H1 (cell line): ENCODE measurements at regions of chr19 and their contacts with region 1.

Region 1: DNA sequence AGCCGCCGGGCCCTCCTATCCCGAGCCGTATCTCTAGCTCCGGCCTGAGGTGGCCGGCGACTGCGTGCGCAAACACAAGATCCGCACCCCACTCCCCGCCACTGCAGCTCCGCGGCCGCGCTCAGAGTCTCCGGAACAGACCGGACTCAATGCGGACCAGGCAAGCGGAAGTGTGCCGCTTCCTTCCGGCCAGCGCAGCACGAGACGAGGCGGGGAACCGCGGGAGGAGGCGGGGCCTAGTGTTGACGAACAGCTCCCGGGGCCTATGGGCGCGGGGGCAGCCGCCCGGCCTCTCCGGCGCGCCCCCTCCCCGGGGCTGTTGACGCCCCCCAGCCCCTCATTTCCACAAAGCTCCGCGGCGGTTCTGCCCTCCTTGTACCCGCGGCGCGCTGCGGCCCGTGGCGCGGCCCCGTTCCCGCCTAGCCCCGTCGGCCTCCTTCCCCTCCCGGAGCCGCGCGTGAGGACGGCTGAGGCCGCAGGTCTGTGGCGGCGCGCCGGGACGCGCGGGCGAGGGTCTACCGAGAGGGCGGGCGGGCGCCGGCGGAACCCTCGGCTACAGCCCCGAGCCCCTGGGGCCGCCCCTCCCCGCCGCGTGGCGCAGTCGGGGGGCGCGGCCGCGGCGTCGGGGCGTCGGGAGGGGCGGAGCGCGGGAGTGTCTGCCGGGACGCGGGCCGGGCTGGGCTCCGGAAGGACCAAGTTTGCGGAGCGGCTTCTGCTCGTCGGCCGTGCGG is at the start of gene DPY19L3:
- DNase-seq: peak; percentile 84 to 98
- H3K4me3 ChIP-seq: peak within 1 kb of the TSS; percentile 76 to 89 (median 87)
- H3K27ac ChIP-seq: peak within 1 kb of the TSS; percentile 96
- H3K4me1 ChIP-seq: peaks cover 2 to 14% (median 7%) of the 10 kb centered on the region in 4 experiments; a peak in 6 of 7 replicates
- H3K27me3 ChIP-seq: no peaks in the 10 kb centered on the region; a peak in 1 of 7 replicates
- CTCF ChIP-seq: no peak
- EP300 ChIP-seq: no peak
- POLR2A ChIP-seq: peak; percentile 87 to 99
- RAD21 ChIP-seq: no peak
- total RNA-seq, gene DPY19L3: 60.2 and 60.7 TPM in 2 replicates

Region 2: DNA sequence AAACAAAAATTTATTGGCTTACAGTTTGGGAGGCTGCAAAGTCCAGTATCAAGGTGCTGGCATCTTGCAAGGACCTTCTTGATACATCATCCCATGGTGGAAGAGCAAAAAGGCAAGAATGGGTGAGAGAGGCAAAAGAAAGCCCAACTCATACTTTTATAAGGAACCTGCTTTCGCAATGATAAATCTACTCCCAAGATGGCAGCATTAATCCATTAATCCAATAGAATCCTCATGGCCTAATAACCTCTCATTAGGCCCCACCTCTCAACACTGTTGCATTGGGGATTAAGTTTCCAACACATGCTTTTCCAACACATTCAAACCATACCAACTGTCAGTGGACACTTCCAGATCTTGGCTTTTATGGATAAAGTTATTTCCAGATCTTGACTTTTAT is 108.9 kb before region 1 on chr19:
- CTCF ChIA-PET with region 1: no interaction called
- POLR2A ChIA-PET with region 1: no interaction called
- DNase-seq: no peak
- H3K4me3 ChIP-seq: no peak overlapping the region
- H3K27ac ChIP-seq: no peak overlapping the region
- H3K4me1 ChIP-seq: no peaks in the 10 kb centered on the region
- H3K27me3 ChIP-seq: no peaks in the 10 kb centered on the region
- CTCF ChIP-seq: no peak
- EP300 ChIP-seq: no peak
- POLR2A ChIP-seq: no peak
- RAD21 ChIP-seq: peak; percentile 39 to 47

Region 3: GRCh38 chr19:32387701-32388392 is 17.7 kb before region 1 on chr19:
- CTCF ChIA-PET with region 1: no interaction called
- POLR2A ChIA-PET with region 1: interaction called, 10 read pairs
- DNase-seq: no peak
- H3K4me3 ChIP-seq: no peak overlapping the region
- H3K27ac ChIP-seq: no peak overlapping the region
- H3K4me1 ChIP-seq: no peaks in the 10 kb centered on the region
- H3K27me3 ChIP-seq: no peaks in the 10 kb centered on the region
- CTCF ChIP-seq: no peak
- EP300 ChIP-seq: no peak
- POLR2A ChIP-seq: no peak
- RAD21 ChIP-seq: no peak

Region 4: DNA sequence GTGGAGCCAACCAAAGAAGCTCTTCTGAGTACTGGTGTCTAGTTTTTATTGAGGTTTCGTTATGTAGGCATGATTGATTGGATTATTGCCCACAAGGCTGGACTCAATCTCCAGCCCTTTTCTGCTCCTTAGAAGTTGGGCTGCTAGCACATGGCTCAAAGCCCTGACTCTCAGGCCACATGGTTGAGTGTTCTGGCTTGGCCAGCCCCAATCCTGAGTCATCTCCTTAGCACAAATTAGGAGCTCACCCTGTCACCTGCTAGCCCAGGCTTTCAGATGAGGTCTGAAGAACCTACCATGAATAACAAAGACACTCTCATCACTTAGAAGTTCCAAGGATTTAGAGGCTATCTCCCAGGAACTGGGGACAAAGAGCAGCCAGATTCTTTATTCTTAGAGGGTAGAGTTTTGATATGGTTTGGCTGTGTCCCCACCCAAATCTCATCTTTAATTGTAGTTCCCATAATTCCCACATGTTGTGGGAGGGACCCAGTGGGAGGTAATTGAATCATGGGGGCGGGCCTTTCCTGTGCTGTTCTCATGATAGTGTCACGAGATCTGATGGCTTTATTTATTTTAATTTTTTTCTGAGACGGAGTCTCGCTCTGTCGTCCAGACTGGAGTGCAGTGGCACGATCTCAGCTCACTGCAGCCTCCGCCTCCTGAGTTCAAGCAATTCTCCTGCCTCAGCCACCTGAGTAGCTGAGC is 11.3 kb after region 1 on chr19:
- CTCF ChIA-PET with region 1: no interaction called
- POLR2A ChIA-PET with region 1: interaction called, 13 read pairs
- DNase-seq: no peak
- H3K4me3 ChIP-seq: no peak overlapping the region
- H3K27ac ChIP-seq: no peak overlapping the region
- H3K4me1 ChIP-seq: no peaks in the 10 kb centered on the region
- H3K27me3 ChIP-seq: no peaks in the 10 kb centered on the region
- CTCF ChIP-seq: no peak
- EP300 ChIP-seq: no peak
- POLR2A ChIP-seq: no peak
- RAD21 ChIP-seq: no peak

Region 5: DNA sequence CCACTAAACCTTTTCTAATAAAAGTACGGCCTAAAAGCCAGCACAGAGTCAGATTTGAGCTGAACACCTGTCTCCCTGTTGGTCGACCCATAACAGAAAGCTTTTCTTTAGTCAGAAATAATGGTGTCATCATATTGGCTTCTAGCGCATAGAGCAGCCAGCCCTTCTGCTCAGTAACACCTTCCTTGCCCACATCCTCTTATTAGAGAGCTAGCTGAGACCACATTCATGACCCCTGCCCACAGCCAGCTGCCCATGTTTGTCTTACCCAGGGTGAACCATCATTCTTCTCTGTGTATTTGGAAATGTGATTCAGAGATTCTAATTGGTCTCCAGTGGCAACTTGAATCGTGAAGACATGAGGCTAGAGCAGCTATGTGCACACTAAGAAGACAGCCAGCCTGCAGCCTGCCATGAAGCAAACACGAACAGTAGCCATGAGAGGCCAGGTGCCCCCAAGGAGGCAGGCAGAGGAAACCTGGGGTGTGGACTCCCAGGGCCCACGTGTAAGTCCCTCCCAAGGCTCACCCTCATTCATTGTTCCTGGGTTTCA is 93.1 kb after region 1 on chr19:
- CTCF ChIA-PET with region 1: no interaction called
- POLR2A ChIA-PET with region 1: no interaction called
- DNase-seq: no peak
- H3K4me3 ChIP-seq: no peak overlapping the region
- H3K27ac ChIP-seq: no peak overlapping the region
- H3K4me1 ChIP-seq: no peaks in the 10 kb centered on the region
- H3K27me3 ChIP-seq: no peaks in the 10 kb centered on the region
- CTCF ChIP-seq: no peak
- EP300 ChIP-seq: no peak
- POLR2A ChIP-seq: no peak
- RAD21 ChIP-seq: no peak